ENCODE measurements at regions of chr1 and their contacts with region 1.

Region 1: GRCh38 chr1:235075188-235075926 is 53.3 kb downstream of the TOMM20 start:
- DNase-seq: peak; percentile 69 to 79 (median 73)
- H3K4me3 ChIP-seq: no peak overlapping the region
- H3K27ac ChIP-seq: peak overlapping the region; percentile 32 to 68
- H3K4me1 ChIP-seq: peaks cover 11% of the 10 kb centered on the region
- H3K27me3 ChIP-seq: no peaks in the 10 kb centered on the region
- CTCF ChIP-seq: no peak
- EP300 ChIP-seq: peak; percentile 45
- POLR2A ChIP-seq: no peak

Region 2: DNA sequence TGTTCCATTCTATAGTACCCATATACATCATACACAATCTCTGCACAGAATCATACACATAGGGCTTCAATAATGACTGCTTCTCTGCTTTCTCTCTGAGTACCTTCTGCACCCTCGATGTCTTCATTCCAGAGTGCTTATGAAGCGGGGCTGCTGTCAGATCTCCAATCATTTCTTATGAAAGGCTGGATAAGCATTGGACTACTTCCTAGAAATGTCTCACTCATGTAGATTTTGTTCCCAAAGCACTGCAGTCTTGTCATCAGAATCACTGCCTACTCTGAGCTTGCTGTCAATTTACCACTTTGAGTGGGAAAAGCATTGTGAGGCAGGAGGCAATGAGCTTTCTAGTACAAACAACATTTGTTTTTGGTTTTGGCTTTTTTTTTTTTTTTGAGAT is 991.9 kb before region 1 on chr1:
- intact Hi-C with region 1: no loop called
- DNase-seq: no peak
- H3K4me3 ChIP-seq: no peak overlapping the region
- H3K27ac ChIP-seq: no peak overlapping the region
- H3K4me1 ChIP-seq: no peaks in the 10 kb centered on the region
- H3K27me3 ChIP-seq: no peaks in the 10 kb centered on the region
- CTCF ChIP-seq: no peak
- EP300 ChIP-seq: no peak
- POLR2A ChIP-seq: no peak

Region 3: DNA sequence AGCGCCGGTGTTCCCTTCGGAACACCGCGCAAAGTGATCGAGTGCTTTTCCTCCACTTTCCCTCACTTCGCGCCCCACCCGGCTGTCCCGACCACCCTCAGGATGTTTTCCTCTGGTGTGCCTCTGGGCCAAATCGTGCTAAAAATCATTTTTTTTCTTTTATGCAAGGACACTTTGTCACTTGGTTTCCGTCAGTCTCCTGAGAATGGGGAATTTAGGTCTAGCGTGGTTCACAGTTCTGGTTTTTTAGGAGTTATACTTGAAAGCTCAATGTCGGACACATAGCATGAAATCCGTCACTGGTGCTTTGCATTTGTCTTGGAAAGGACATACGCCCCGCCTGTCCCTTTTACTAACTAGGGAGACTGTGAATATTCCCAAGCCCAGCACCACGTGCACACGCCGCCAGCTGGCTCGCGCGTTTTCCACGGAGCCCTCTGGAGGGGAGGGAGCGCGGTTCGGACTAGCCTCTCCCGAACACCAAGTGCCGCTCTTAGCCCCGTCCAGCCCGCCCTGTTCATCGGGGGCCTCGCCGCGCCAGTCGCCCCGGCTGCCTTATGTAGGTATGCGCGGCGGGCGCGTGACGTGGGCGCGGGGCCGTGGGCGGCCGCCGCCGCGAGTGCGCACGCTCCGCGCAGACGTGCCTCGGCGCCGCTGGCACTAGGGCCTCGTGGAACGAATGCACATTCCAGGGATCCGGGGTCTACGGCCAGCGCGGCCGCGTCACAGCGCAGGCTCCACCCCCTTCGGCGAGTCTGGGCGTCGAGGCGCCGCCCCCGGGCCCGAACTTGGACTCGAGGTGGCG is 464.8 kb before region 1 on chr1:
- intact Hi-C with region 1: loop called (anchors 2 to 5 kb)
- DNase-seq: peak; percentile 96 to 98 (median 97)
- H3K4me3 ChIP-seq: peak overlapping the region; percentile 46
- H3K27ac ChIP-seq: peak overlapping the region; percentile 85 to 98
- H3K4me1 ChIP-seq: peaks cover 19% of the 10 kb centered on the region
- H3K27me3 ChIP-seq: no peaks in the 10 kb centered on the region
- CTCF ChIP-seq: peak in 2 of 3 donors; percentile 37 to 53
- EP300 ChIP-seq: no peak
- POLR2A ChIP-seq: peak; percentile 95

Region 4: GRCh38 chr1:234730770-234731568 is 344.4 kb before region 1 on chr1:
- intact Hi-C with region 1: loop called in 2 of 4 experiments (anchors 10 kb)
- DNase-seq: peak in 1 of 5 donors; percentile 10
- H3K4me3 ChIP-seq: no peak overlapping the region
- H3K27ac ChIP-seq: no peak overlapping the region
- H3K4me1 ChIP-seq: peaks cover 19% of the 10 kb centered on the region
- H3K27me3 ChIP-seq: no peaks in the 10 kb centered on the region
- CTCF ChIP-seq: no peak
- EP300 ChIP-seq: no peak
- POLR2A ChIP-seq: no peak

Region 5: GRCh38 chr1:234925440-234926263 is 149.7 kb before region 1 on chr1:
- intact Hi-C with region 1: loop called in 1 of 4 experiments (anchors 10 kb)
- DNase-seq: peak in 1 of 5 donors; percentile 54
- H3K4me3 ChIP-seq: no peak overlapping the region
- H3K27ac ChIP-seq: no peak overlapping the region
- H3K4me1 ChIP-seq: peaks cover 5% of the 10 kb centered on the region
- H3K27me3 ChIP-seq: no peaks in the 10 kb centered on the region
- CTCF ChIP-seq: no peak
- EP300 ChIP-seq: no peak
- POLR2A ChIP-seq: no peak

Region 6: GRCh38 chr1:234978397-234979295 is 96.7 kb before region 1 on chr1:
- intact Hi-C with region 1: loop called in 1 of 4 experiments (anchors 10 kb)
- DNase-seq: peak in 1 of 5 donors; percentile 56
- H3K4me3 ChIP-seq: no peak overlapping the region
- H3K27ac ChIP-seq: peak overlapping the region in 1 of 2 donors; percentile 83
- H3K4me1 ChIP-seq: peaks cover 34% of the 10 kb centered on the region
- H3K27me3 ChIP-seq: no peaks in the 10 kb centered on the region
- CTCF ChIP-seq: no peak
- EP300 ChIP-seq: no peak
- POLR2A ChIP-seq: no peak

Region 7: DNA sequence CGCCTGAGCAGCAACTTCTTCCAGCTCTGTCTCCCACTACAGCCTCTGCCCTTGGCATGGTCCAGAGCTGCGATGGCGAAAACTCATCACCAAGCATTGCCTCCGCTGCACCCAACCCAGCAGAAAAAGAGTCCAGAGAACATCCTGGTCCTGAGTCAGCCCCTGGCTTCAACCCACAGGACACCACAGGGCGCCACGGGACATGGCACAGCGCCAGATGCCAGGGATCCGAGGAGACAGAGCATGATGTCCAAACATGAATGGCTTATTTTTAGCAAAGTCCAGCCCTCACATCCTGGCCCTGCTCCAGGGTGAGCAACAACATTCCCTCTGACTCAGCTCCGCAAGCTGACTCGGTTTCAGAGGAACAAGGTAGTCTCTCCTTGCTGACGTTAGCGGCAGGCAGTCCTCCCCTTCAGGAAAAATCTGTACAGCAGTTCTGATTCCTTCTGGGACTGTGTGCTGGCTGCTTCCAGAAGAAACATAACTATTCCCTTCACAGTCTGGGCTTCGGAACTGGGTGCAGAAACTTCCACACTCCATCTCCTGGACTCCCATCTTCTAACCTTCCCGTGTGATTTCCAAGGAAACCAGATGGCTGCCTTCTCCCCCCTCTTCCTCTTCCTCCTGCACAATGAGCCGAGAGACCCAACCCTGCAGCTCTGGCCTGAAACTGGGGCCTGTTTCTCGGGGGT is 78.0 kb before region 1 on chr1:
- intact Hi-C with region 1: loop called in 1 of 4 experiments (anchors 5 kb)
- DNase-seq: peak; percentile 93 to 97 (median 97)
- H3K4me3 ChIP-seq: no peak overlapping the region
- H3K27ac ChIP-seq: peak overlapping the region; percentile 62 to 64
- H3K4me1 ChIP-seq: peaks cover 9% of the 10 kb centered on the region
- H3K27me3 ChIP-seq: no peaks in the 10 kb centered on the region
- CTCF ChIP-seq: no peak
- EP300 ChIP-seq: peak; percentile 78
- POLR2A ChIP-seq: peak; percentile 22

Measured in ovary (tissue), 10 donors.